GM12878 (cell line): ENCODE measurements at regions of chr3 and their contacts with region 1.

Region 1: DNA sequence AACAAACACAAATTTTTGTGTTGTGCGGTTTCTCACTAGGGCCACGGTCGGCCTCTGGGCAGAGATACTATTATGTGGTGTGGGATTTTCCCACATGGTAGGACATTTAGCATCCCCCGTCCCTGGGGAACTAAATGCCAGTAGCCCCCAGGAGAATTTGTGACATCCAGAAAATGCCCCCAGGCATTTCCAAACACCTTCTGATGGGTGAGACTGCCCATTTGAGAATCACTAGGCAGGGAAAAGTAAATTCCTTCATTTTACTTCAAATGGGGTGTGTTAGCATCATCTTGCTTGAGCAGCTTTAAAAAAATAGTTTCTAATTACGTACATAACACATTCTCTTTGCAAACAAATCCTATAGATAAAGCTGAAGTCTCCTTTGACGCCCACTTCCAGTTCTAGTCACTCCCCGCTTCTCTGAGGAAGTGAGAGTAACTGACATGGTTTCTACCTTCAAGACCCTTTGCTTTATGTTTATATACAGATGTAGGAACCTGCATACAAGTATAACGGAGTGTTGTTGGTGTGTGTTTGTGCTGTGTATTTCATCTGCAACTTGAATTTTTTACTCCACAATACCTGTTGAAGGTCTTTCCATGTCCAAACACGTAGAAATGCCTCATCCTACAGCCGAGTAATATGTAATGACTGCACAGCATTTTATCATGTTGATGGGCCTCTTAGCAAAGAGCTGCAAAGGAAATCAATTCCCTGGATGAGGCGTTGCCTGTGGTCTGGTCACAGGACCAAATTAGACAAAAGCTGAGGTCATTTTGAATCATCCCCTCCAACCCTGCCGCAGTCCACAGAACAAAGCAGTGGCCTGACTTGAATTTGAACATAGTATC is 31.4 kb upstream of the ZBTB38 start:
- DNase-seq: peak; percentile 95
- ATAC-seq: peak; percentile 90
- H3K4me3 ChIP-seq: peak overlapping the region; percentile 33
- H3K27ac ChIP-seq: peak overlapping the region; percentile 95
- H3K4me1 ChIP-seq: peaks cover 45% of the 10 kb centered on the region
- H3K27me3 ChIP-seq: no peaks in the 10 kb centered on the region
- CTCF ChIP-seq: no peak
- EP300 ChIP-seq: peak; percentile 27 to 98; a peak in 3 of 4 replicates
- POLR2A ChIP-seq: no peak
- RAD21 ChIP-seq: 0 out of 2 replicates have a peak, but pooled peaks have one; percentile 12

Region 2: DNA sequence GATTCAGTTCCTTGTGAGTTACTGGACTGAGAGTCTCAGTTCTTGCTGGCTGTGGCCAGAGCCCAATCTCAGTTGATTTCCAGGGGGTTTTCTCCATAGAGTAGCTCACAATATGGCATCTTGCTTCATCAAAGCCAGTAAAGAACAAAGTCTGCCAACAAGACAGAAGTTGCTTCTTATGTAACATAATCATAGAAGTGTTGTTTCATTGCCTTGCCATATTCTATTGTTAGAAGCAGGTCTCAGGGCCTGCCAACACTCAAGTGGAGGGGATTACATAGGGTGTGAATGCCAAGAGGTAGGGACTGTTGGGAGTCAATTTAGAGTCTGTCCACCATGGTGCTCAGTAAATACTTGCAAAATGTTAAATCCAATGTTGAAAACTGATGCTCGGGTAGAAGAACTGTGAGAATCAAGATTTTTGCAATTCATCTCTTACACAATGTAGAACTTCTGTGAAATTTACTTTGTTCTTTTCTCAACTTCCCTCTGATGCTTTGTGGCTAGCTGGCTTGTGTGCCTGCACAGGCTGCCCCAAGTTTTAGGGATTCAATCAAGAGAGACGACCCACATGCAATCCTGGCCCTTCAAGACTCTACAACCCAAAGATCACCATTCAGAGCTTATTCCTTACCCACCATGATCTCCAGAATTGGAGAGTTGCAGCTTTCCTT is 118.6 kb before region 1 on chr3:
- CTCF ChIA-PET with region 1: no interaction called
- POLR2A ChIA-PET with region 1: no interaction called
- RAD21 ChIA-PET with region 1: no interaction called
- SMC1A ChIA-PET with region 1: no interaction called
- in situ Hi-C with region 1: no loop called
- intact Hi-C with region 1: no loop called
- DNase-seq: no peak
- ATAC-seq: no peak
- H3K4me3 ChIP-seq: no peak overlapping the region
- H3K27ac ChIP-seq: no peak overlapping the region
- H3K4me1 ChIP-seq: no peaks in the 10 kb centered on the region
- H3K27me3 ChIP-seq: peaks cover 3 to 4% of the 10 kb centered on the region in 2 experiments; a peak in 2 of 4 replicates
- CTCF ChIP-seq: no peak
- EP300 ChIP-seq: no peak
- POLR2A ChIP-seq: no peak
- RAD21 ChIP-seq: no peak

Region 3: GRCh38 chr3:141321109-141321497 is 15.8 kb before region 1 on chr3:
- CTCF ChIA-PET with region 1: interaction called, 83 read pairs
- POLR2A ChIA-PET with region 1: interaction called, 15 read pairs
- RAD21 ChIA-PET with region 1: interaction called, 14 read pairs
- SMC1A ChIA-PET with region 1: interaction called, 112 read pairs
- in situ Hi-C with region 1: no loop called
- intact Hi-C with region 1: no loop called
- DNase-seq: no peak
- ATAC-seq: no peak
- H3K4me3 ChIP-seq: no peak overlapping the region
- H3K27ac ChIP-seq: no peak overlapping the region
- H3K4me1 ChIP-seq: peaks cover 9% of the 10 kb centered on the region; the same call in 1 of the 2 replicates
- H3K27me3 ChIP-seq: no peaks in the 10 kb centered on the region
- CTCF ChIP-seq: no peak
- EP300 ChIP-seq: no peak
- POLR2A ChIP-seq: no peak
- RAD21 ChIP-seq: no peak

Region 4: DNA sequence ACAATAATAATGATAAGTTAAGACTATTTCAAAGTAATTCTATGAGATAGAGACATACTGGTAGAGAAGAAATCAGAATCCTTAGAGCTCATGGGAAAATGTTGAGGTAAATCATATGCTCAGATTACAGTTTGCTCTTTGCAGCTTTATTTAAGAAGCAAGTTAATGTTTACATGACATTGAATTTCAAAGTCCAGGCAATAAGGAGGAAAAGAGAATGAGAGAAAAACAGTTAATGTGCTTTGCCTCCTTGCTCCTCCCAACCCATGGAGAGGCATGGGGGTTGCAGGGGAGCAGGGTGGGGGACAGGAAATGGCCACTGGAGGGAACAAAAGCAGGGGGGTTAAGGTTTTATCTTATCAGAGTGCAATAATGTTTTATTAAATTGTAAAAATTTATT is 10.8 kb before region 1 on chr3:
- CTCF ChIA-PET with region 1: interaction called, 9 read pairs
- POLR2A ChIA-PET with region 1: interaction called, 19 read pairs
- RAD21 ChIA-PET with region 1: interaction called, 25 read pairs
- SMC1A ChIA-PET with region 1: interaction called, 49 read pairs
- in situ Hi-C with region 1: no loop called
- intact Hi-C with region 1: no loop called
- DNase-seq: no peak
- ATAC-seq: no peak
- H3K4me3 ChIP-seq: no peak overlapping the region
- H3K27ac ChIP-seq: no peak overlapping the region
- H3K4me1 ChIP-seq: peaks cover 19% of the 10 kb centered on the region
- H3K27me3 ChIP-seq: no peaks in the 10 kb centered on the region
- CTCF ChIP-seq: no peak
- EP300 ChIP-seq: no peak
- POLR2A ChIP-seq: no peak
- RAD21 ChIP-seq: no peak

Region 5: DNA sequence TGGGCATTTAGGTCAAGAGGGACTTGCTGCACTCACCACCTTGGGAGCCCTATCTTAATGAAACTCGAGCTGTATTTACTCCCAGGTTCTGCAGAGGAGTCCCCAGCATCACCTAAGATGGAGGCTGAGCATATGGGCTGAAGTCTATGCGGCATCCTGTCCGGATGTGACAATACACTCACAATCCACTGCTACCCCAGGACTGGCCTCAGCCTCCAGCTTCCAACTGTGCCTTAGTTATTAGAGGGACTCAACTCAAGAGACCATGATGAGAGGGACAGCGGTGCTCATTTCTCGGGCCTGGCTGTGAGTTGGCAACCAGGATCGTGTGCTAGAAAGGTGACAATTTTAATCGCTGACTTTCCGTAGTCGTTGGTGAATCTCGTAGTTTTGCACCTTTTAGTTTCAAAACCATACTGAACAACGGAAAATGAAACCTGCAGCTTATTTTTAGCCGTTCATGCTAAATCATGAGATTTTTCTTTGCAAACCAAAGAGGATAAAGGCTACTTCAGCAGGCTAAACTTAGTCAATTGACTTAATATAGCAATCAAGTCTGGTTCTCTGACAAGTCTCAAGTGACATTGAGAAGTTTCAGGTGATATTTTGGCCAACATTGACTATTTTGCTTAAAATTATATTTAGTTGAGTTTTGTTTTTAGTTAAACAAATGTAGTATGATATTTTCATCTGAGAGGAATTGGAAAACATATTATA is 42.5 kb after region 1 on chr3:
- CTCF ChIA-PET with region 1: interaction called, 3 read pairs
- POLR2A ChIA-PET with region 1: interaction called, 6 read pairs
- RAD21 ChIA-PET with region 1: interaction called, 12 read pairs
- SMC1A ChIA-PET with region 1: interaction called, 55 read pairs
- in situ Hi-C with region 1: no loop called
- intact Hi-C with region 1: loop called (anchors 5 kb)
- DNase-seq: peak; percentile 95
- ATAC-seq: peak; percentile 62
- H3K4me3 ChIP-seq: peak overlapping the region; percentile 41; the same call in 1 of the 2 replicates
- H3K27ac ChIP-seq: peak overlapping the region; percentile 94
- H3K4me1 ChIP-seq: peaks cover 81% of the 10 kb centered on the region
- H3K27me3 ChIP-seq: no peaks in the 10 kb centered on the region
- CTCF ChIP-seq: no peak
- EP300 ChIP-seq: peak; percentile 93 to 98
- POLR2A ChIP-seq: peak; percentile 68
- RAD21 ChIP-seq: peak; percentile 21; the same call in 1 of the 2 replicates

Region 6: GRCh38 chr3:141386611-141387111 is 49.8 kb after region 1 on chr3:
- CTCF ChIA-PET with region 1: interaction called, 18 read pairs
- POLR2A ChIA-PET with region 1: interaction called, 8 read pairs
- RAD21 ChIA-PET with region 1: interaction called, 12 read pairs
- SMC1A ChIA-PET with region 1: interaction called, 55 read pairs
- in situ Hi-C with region 1: no loop called
- intact Hi-C with region 1: no loop called
- DNase-seq: no peak
- ATAC-seq: peak; percentile 58
- H3K4me3 ChIP-seq: peak overlapping the region; percentile 67
- H3K27ac ChIP-seq: peak overlapping the region; percentile 94
- H3K4me1 ChIP-seq: peaks cover 30% of the 10 kb centered on the region
- H3K27me3 ChIP-seq: no peaks in the 10 kb centered on the region
- CTCF ChIP-seq: no peak
- EP300 ChIP-seq: no peak
- POLR2A ChIP-seq: peak; percentile 93
- RAD21 ChIP-seq: no peak

Region 7: DNA sequence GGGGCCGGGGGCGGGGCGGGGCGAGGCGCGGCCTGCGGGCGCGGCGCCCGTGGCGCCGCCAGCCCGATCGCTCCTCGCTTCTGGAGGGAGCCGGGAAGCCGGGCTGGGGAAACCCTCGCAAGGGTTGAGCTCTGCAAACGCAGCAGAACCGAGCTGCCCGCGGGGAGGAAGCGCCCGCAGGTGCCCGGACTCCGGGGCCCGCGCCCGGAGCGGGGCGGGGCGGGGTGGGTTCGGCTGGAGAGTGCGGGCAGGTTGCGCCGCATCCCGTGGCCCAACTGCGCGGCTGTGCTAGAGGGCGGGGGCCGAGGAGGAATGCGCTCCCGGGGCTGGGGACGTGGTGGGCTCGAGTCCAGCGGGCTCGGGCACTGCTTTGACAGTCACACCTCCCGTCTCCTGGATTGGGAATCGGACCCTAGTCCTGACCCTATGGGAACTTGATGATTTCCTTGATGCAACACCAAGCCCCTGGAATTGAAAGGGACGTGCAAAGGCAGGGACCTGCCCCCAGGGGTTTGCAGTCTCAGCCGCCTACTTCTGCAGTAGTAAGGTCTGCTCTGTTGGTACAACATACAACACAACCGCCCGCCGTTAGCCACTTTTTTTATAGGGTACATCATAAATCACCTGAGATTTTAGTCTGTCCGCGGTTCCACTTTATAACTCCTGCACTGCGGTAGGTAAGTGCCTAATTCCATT is 65.7 kb after region 1 on chr3:
- CTCF ChIA-PET with region 1: interaction called, 6 read pairs
- POLR2A ChIA-PET with region 1: interaction called, 8 read pairs
- RAD21 ChIA-PET with region 1: interaction called, 12 read pairs
- SMC1A ChIA-PET with region 1: interaction called, 10 read pairs
- in situ Hi-C with region 1: no loop called
- intact Hi-C with region 1: loop called (anchors 2 kb)
- DNase-seq: no peak
- ATAC-seq: peak; percentile 61
- H3K4me3 ChIP-seq: peak overlapping the region; percentile 72
- H3K27ac ChIP-seq: peak overlapping the region; percentile 92
- H3K4me1 ChIP-seq: peaks cover 29% of the 10 kb centered on the region
- H3K27me3 ChIP-seq: no peaks in the 10 kb centered on the region
- CTCF ChIP-seq: no peak
- EP300 ChIP-seq: no peak
- POLR2A ChIP-seq: peak; percentile 63
- RAD21 ChIP-seq: no peak

Region 8: DNA sequence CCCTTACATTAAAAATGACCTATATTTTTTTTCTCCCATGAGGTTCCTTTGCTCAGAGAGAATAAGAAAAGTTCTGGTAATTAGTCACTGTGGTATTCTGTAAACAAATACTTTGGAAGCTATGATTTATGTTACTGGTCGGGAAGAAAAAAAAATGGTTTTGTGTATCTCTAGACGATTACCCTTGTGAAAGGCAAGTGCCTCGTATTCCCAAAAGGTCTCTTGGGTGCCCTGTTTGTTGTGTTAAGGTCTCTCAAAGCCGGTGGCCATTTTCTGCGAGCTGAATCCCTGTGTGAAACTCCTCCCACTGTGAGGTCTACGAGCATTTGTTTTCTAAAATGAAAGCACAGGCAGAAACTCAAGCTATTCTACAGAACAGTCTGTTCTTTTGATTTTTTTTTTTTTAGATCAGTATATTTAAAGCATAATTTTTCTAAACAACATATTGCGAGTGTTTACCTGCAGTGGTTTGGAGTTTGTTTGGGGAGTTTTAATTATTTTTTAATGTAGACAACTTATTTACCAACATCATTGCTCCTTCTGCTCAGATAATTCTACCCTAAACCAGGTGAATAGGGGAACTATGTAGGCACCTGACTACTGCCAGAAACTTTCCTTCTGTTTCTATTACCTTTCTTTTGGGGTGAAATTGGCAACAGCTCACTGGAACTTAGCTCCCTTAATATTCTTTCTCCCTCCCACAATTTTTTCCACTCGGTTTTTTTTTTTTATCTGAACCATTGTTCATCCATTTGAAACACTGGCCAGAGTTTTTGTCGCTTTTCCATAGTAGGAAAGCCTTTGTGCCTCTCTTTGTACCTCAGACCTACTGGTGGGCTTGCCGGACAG is 75.4 kb after region 1 on chr3:
- CTCF ChIA-PET with region 1: interaction called, 7 read pairs
- POLR2A ChIA-PET with region 1: interaction called, 6 read pairs
- RAD21 ChIA-PET with region 1: interaction called, 11 read pairs
- SMC1A ChIA-PET with region 1: interaction called, 10 read pairs
- in situ Hi-C with region 1: no loop called
- intact Hi-C with region 1: no loop called
- DNase-seq: no peak
- ATAC-seq: peak; percentile 63
- H3K4me3 ChIP-seq: peak overlapping the region; percentile 57
- H3K27ac ChIP-seq: peak overlapping the region; percentile 92
- H3K4me1 ChIP-seq: peaks cover 63% of the 10 kb centered on the region
- H3K27me3 ChIP-seq: no peaks in the 10 kb centered on the region
- CTCF ChIP-seq: no peak
- EP300 ChIP-seq: no peak
- POLR2A ChIP-seq: 0 out of 2 replicates have a peak, but pooled peaks have one; percentile 34
- RAD21 ChIP-seq: no peak